ENCODE measurements at regions of chr12 and their contacts with region 1.

Region 1: GRCh38 chr12:569803-570434 is 93.3 kb downstream of the NINJ2 start:
- DNase-seq: peak; percentile 59
- ATAC-seq: peak; percentile 68
- H3K4me3 ChIP-seq: peak overlapping the region; percentile 58 to 81
- H3K27ac ChIP-seq: peak overlapping the region; percentile 93
- H3K4me1 ChIP-seq: peaks cover 20 to 52% of the 10 kb centered on the region in 2 experiments
- H3K27me3 ChIP-seq: no peaks in the 10 kb centered on the region
- CTCF ChIP-seq: peak in 2 of 3 experiments; percentile 88 to 90; a peak in 4 of 6 replicates
- POLR2A ChIP-seq: no peak
- RAD21 ChIP-seq: no peak

Region 2: GRCh38 chr12:510071-510825 is 59.7 kb before region 1 on chr12:
- CTCF ChIA-PET with region 1: no interaction called
- POLR2A ChIA-PET with region 1: no interaction called
- RAD21 ChIA-PET with region 1: no interaction called
- intact Hi-C with region 1: no loop called
- DNase-seq: no peak
- ATAC-seq: peak; percentile 73
- H3K4me3 ChIP-seq: no peak overlapping the region
- H3K27ac ChIP-seq: no peak overlapping the region
- H3K4me1 ChIP-seq: peaks cover 21 to 26% of the 10 kb centered on the region in 2 experiments
- H3K27me3 ChIP-seq: no peaks in the 10 kb centered on the region
- CTCF ChIP-seq: no peak
- POLR2A ChIP-seq: no peak
- RAD21 ChIP-seq: no peak

Region 3: GRCh38 chr12:553205-554000 is 16.5 kb before region 1 on chr12:
- CTCF ChIA-PET with region 1: no interaction called
- POLR2A ChIA-PET with region 1: no interaction called
- RAD21 ChIA-PET with region 1: no interaction called
- intact Hi-C with region 1: no loop called
- DNase-seq: no peak
- ATAC-seq: no peak
- H3K4me3 ChIP-seq: no peak overlapping the region
- H3K27ac ChIP-seq: no peak overlapping the region
- H3K4me1 ChIP-seq: no peaks in the 10 kb centered on the region
- H3K27me3 ChIP-seq: no peaks in the 10 kb centered on the region
- CTCF ChIP-seq: no peak
- POLR2A ChIP-seq: no peak
- RAD21 ChIP-seq: no peak

Region 4: GRCh38 chr12:740896-741295 is 171.0 kb after region 1 on chr12:
- CTCF ChIA-PET with region 1: no interaction called
- POLR2A ChIA-PET with region 1: no interaction called
- RAD21 ChIA-PET with region 1: no interaction called
- intact Hi-C with region 1: no loop called
- DNase-seq: no peak
- ATAC-seq: no peak
- H3K4me3 ChIP-seq: no peak overlapping the region
- H3K27ac ChIP-seq: no peak overlapping the region
- H3K4me1 ChIP-seq: no peaks in the 10 kb centered on the region
- H3K27me3 ChIP-seq: no peaks in the 10 kb centered on the region
- CTCF ChIP-seq: no peak
- POLR2A ChIP-seq: no peak
- RAD21 ChIP-seq: no peak

Region 5: DNA sequence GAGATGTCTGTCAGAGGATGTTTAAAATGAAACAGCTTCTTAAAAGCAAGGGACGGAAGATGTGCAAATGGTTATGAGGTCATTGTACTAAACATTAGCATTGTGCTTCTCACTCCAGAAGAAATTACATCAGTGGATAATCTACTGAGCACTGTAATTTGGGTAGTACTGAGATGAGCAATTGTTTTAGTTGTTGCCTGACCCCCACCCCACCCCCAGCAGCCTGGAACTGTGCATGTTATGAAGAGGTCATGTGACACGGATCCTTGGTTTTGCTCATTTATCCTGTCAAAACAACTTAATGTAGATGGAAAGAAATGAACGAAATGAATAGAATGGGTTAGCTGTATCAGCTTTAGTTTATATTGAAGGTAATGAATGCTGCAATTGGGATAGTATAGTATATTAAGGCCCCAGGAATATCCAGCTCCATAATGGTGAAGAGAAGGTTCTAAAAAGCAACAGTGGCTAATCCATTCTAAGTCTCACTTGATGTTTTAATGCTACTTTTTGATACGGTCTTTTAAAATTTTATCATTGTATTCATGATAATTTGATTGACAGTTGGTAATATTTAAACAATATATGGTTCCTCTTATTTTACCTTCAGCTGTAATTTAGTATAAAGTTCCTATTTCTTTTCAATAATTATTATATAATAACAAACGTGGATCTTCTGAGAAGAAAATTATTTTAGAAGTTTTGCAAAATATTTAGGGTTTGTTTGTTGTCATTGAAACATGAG is 240.9 kb after region 1 on chr12:
- CTCF ChIA-PET with region 1: interaction called, 24 read pairs
- POLR2A ChIA-PET with region 1: no interaction called
- RAD21 ChIA-PET with region 1: no interaction called
- intact Hi-C with region 1: loop called (anchors 2 kb)
- DNase-seq: no peak
- ATAC-seq: no peak
- H3K4me3 ChIP-seq: no peak overlapping the region
- H3K27ac ChIP-seq: no peak overlapping the region
- H3K4me1 ChIP-seq: no peaks in the 10 kb centered on the region
- H3K27me3 ChIP-seq: no peaks in the 10 kb centered on the region
- CTCF ChIP-seq: no peak
- POLR2A ChIP-seq: no peak
- RAD21 ChIP-seq: no peak

Region 6: GRCh38 chr12:949453-950191 is 379.7 kb after region 1 on chr12 and contains the start of gene RAD52:
- CTCF ChIA-PET with region 1: interaction called, 13 read pairs
- POLR2A ChIA-PET with region 1: interaction called, 6 read pairs
- RAD21 ChIA-PET with region 1: interaction called in 1 of 2 experiments, 3 read pairs
- intact Hi-C with region 1: loop called (anchors 1 kb)
- DNase-seq: peak; percentile 97
- ATAC-seq: peak; percentile 93
- H3K4me3 ChIP-seq: peak within 1 kb of the TSS; percentile 57 to 94
- H3K27ac ChIP-seq: peak within 1 kb of the TSS; percentile 86
- H3K4me1 ChIP-seq: peaks cover 5 to 14% of the 10 kb centered on the region in 2 experiments
- H3K27me3 ChIP-seq: no peaks in the 10 kb centered on the region
- CTCF ChIP-seq: peak; percentile 92 to 98 (median 95)
- POLR2A ChIP-seq: peak; percentile 91
- RAD21 ChIP-seq: peak; percentile 90
- total RNA-seq, gene RAD52: 24.4 TPM

Region 7: DNA sequence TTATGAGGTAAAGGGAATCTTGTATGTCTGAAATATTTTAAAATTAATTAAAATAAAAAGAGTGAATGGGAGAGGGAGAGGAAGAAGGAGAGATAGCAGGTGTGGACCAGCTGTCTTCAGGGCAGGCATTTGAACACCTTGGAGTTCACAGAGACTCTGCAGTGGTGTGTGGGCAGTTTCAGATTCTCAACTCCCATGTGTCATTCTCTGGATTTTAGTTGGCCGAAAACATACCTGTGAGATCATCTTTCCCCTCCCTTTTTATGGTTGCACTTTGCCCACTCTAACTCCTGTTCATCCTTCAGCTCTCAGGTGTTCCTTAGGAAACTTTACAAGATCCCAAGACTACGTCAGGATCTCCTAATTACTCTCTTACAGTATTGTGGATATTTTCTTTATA is 529.2 kb after region 1 on chr12:
- CTCF ChIA-PET with region 1: no interaction called
- POLR2A ChIA-PET with region 1: interaction called, 3 read pairs
- RAD21 ChIA-PET with region 1: no interaction called
- intact Hi-C with region 1: loop called (anchors 5 kb)
- DNase-seq: no peak
- ATAC-seq: no peak
- H3K4me3 ChIP-seq: no peak overlapping the region
- H3K27ac ChIP-seq: no peak overlapping the region
- H3K4me1 ChIP-seq: peaks cover 6 to 12% of the 10 kb centered on the region in 2 experiments; a peak in 3 of 4 replicates
- H3K27me3 ChIP-seq: no peaks in the 10 kb centered on the region
- CTCF ChIP-seq: no peak
- POLR2A ChIP-seq: no peak
- RAD21 ChIP-seq: no peak

Region 8: DNA sequence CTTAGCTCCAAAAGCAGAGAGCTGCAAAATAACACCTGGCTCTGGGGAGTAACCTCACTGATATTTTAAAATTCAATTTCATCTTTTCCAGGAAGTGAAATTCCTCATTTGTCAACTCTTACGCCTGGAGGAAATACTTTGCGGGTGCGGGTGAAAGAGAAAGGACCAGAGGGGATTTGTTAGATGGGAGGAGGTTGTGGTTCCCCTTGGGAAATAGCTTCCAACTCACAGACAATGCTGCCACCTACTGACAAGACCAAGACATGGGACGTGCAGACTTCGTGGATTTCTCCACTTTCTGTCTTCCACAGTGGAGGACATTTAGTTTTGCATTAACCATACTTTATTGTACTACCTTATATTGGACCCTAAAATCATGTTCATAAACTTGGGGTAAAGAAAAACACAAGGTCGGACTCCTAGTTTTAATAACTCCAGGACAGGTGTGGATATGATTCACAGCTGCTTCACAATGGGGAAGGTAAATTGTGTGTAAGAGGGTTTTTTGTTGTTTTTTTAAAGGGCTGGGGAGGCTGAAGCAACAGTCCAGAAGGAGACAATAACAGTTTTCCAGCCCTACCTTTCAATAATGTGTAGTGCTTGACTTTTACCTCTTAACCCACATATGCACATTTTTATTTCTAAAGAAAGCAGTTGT is 1013.6 kb after region 1 on chr12:
- CTCF ChIA-PET with region 1: interaction called, 19 read pairs
- POLR2A ChIA-PET with region 1: no interaction called
- RAD21 ChIA-PET with region 1: interaction called in 1 of 2 experiments, 3 read pairs
- intact Hi-C with region 1: loop called (anchors 2 kb)
- DNase-seq: peak; percentile 75
- ATAC-seq: peak; percentile 84
- H3K4me3 ChIP-seq: no peak overlapping the region
- H3K27ac ChIP-seq: no peak overlapping the region
- H3K4me1 ChIP-seq: peaks cover 2 to 4% of the 10 kb centered on the region in 2 experiments; a peak in 1 of 4 replicates
- H3K27me3 ChIP-seq: no peaks in the 10 kb centered on the region
- CTCF ChIP-seq: peak; percentile 75 to 91 (median 77)
- POLR2A ChIP-seq: no peak
- RAD21 ChIP-seq: peak; percentile 92

Measured in HCT116 (cell line).